ENCODE measurements at regions of chr11 and their contacts with region 1.

Region 1: GRCh38 chr11:24558586-24558985 is 61.7 kb downstream of the LUZP2 start:
- DNase-seq: no peak
- ATAC-seq: no peak
- H3K4me3 ChIP-seq: no peak overlapping the region
- H3K27ac ChIP-seq: no peak overlapping the region
- H3K4me1 ChIP-seq: no peaks in the 10 kb centered on the region
- H3K27me3 ChIP-seq: no peaks in the 10 kb centered on the region
- CTCF ChIP-seq: no peak
- POLR2A ChIP-seq: no peak

Region 2: GRCh38 chr11:23727794-23728193 is 830.8 kb before region 1 on chr11:
- intact Hi-C with region 1: loop called in 1 of 10 experiments (anchors 10 kb)
- DNase-seq: no peak
- ATAC-seq: no peak
- H3K4me3 ChIP-seq: no peak overlapping the region
- H3K27ac ChIP-seq: no peak overlapping the region
- H3K4me1 ChIP-seq: no peaks in the 10 kb centered on the region
- H3K27me3 ChIP-seq: no peaks in the 10 kb centered on the region
- CTCF ChIP-seq: no peak
- POLR2A ChIP-seq: no peak